K562 (cell line): ENCODE measurements at regions of chr9 and their contacts with region 1.

Region 1: DNA sequence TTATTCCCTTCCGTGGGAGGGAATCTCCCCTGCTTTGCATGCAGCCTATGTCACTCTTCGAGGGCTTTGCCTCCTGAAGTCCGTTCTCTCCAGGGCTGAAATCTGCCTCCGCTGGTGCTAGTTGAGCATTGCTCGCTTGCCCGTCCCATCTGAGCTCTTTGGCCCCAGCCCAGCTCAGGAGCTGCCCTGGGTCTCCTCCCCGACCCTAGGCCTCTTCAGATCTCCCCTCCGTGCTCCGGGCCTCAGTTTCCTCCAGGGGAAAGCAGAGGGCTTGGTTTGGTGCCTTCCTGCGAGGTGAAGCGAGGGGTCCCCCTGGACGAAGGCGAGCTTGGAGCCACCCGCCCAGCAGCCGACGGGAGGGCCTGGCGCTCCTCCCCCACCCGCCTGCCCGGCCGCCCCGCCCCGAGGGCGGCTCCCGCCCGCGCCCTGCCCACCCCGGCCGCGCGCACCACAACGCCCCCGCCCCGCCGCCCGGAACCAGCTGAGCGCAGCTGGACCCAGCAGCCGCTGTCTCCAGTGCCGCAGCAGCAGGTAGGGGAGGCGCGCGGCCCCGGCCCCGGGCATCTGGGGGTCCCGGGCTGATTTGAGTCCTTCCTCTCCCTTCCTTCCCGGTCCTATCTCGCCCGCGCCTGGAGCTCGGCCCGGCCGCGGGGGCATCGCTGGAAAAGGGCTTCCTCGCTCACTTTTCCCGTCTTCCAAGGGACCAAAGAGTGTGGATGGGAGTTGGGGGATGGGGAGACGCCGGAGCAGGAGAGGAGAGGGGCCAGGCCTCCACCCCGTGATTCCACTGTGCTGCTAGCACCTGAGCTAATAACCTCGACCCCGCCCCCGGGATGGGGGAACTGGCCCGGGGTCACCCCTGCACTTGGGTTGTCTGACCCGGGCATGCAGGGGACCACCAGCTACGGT is at the start of gene GSN:
- DNase-seq: peak; percentile 81 to 97 (median 92)
- ATAC-seq: peak; percentile 97
- H3K4me3 ChIP-seq: peak within 1 kb of the TSS; percentile 62
- H3K27ac ChIP-seq: no peak within 1 kb of the TSS; the same call in 2 of the 3 replicates
- H3K4me1 ChIP-seq: peaks cover 14 to 31% of the 10 kb centered on the region in 2 experiments
- H3K27me3 ChIP-seq: no peaks in the 10 kb centered on the region
- CTCF ChIP-seq: 0 out of 6 replicates have a peak, but pooled peaks of 1 of the 3 experiments have one; percentile 2
- EP300 ChIP-seq: no peak
- POLR2A ChIP-seq: peak; percentile 49; the same call in 1 of the 2 replicates
- RAD21 ChIP-seq: no peak
- polyA plus RNA-seq, gene GSN: 0.39 to 0.41 TPM

Region 2: GRCh38 chr9:121278535-121279261 is 10.8 kb after region 1 on chr9:
- CTCF ChIA-PET with region 1: no interaction called
- POLR2A ChIA-PET with region 1: interaction called, 10 read pairs
- in situ Hi-C with region 1: no loop called
- intact Hi-C with region 1: no loop called
- DNase-seq: peak; percentile 60 to 81 (median 64)
- ATAC-seq: peak; percentile 90
- H3K4me3 ChIP-seq: no peak overlapping the region
- H3K27ac ChIP-seq: no peak overlapping the region
- H3K4me1 ChIP-seq: peaks cover 32 to 36% of the 10 kb centered on the region in 2 experiments
- H3K27me3 ChIP-seq: no peaks in the 10 kb centered on the region
- CTCF ChIP-seq: peak; percentile 75 to 92 (median 89)
- EP300 ChIP-seq: 0 out of 2 replicates have a peak, but pooled peaks have one; percentile 22
- POLR2A ChIP-seq: no peak
- RAD21 ChIP-seq: peak; percentile 63 to 90